HEK293T (cell line): ENCODE measurements at regions of chr6 and their contacts with region 1.

Region 1: DNA sequence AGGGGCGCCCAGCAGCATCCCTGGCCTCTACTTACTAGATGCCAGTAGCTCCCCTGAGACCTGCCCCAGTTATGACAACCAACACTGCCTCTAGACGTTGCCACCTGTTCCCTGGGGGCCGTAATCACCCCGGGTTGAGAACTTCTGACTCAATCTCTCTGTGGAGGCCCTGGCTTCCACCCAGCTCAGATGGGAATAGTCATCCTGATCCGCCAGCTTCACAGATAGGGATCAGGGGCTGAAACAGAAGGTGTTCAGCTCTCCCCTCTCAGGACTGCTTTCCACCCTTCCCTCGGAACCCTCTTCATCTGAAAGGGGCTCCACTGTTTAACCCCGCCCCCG is 3.3 kb downstream of the CAPN11 start:
- DNase-seq: no peak

Region 2: DNA sequence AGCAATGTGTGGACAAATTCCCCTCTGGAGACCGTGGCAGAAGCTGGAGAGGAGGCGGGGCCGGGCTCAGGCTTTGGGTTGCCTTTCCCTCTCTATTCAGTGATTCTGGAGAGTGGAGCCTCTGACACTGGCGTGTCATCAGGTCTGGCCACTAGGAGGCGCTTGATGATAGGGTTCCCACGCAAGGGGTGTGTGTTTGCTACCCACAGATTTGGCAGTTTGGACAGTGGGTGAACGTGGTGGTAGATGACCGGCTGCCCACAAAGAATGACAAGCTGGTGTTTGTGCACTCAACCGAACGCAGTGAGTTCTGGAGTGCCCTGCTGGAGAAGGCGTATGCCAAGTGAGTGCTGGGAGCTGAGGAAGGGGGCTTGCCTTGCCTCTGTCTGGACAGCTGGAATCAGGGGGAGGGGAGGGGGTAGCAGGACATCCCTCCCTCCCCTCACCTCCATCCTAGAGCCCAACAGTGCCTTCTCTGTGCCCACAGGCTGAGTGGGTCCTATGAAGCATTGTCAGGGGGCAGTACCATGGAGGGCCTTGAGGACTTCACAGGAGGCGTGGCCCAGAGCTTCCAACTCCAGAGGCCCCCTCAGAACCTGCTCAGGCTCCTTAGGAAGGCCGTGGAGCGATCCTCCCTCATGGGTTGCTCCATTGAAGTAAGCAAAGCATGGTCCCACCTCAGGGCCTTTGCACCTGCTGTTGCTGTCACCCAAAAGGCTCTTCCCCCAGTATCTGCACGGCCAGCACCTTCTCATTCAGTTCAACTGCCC is 10.9 kb after region 1 on chr6:
- CTCF ChIA-PET with region 1: interaction called, 21 read pairs
- POLR2A ChIA-PET with region 1: no interaction called
- DNase-seq: peak; percentile 88